Panc1 (cell line): ENCODE measurements at regions of chr11 and their contacts with region 1.

Region 1: DNA sequence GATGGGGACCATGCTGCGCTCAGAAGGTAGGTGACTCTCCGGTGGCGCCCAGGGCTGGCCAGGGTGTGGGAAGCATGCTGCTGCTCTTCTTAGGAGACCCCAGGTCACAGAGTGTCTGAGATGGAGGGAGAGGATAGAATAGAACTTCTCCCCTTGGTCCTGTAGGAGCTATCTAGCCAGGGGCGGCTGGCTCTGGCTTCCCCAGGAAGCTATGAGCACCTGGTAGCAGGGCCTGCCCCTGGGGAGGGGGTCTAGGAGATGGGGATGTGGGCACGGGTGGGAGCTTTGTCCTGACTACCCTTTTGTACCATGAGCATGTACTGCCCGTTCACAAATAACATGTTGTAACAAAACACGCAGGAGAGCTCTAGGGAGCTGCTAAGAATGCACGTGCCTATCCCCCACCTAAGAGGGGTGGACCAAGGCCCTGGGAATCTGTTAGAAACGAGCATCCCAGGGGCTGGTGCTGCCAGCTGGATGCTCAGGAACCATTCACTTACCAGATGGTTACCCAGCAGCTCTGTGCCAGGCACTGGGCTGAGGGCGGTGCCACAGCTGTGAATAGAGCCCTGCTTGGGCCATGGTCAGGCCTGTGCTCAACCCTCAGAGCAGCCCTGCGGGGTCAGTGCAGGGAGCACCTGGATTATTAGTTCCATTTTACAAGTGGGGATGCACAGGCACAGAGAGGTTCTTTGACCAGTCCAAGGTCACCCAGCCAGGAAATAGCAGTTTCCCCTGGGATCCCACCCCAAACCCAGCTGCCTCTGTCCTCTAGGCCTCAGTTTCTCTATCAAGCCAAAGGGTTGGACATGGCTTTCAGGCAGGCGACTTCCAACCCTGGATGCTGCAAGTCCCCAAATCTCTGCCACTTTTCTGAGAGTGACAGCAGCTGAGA is 2.2 kb downstream of the SLC39A13 start:
- DNase-seq: no peak
- ATAC-seq: no peak
- H3K4me3 ChIP-seq: no peak overlapping the region
- H3K27ac ChIP-seq: no peak overlapping the region
- H3K4me1 ChIP-seq: peaks cover 21% of the 10 kb centered on the region
- H3K27me3 ChIP-seq: no peaks in the 10 kb centered on the region
- CTCF ChIP-seq: no peak

Region 2: DNA sequence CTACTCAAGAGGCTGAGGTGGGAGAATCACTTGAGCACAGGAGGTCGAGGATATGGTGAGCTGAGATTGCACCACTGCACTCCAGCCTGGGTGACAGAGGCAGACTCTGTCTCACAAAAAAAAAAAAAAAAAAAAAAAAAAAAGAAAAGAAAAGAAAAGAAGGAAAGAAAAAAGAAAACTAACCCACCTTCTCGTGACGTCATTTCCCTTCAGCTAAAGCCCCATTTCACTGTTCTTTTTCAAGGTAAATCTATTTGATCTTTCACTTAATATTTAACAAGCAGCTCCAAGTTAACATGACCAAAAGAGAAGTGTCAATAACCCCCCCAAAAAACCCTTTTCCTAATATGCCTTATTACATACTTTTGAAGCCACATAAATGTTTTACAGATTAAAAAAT is 33.2 kb after region 1 on chr11:
- CTCF ChIA-PET with region 1: interaction called, 13 read pairs
- POLR2A ChIA-PET with region 1: no interaction called
- in situ Hi-C with region 1: no loop called
- intact Hi-C with region 1: no loop called
- DNase-seq: no peak
- ATAC-seq: no peak
- H3K4me3 ChIP-seq: no peak overlapping the region
- H3K27ac ChIP-seq: no peak overlapping the region
- H3K4me1 ChIP-seq: no peaks in the 10 kb centered on the region
- H3K27me3 ChIP-seq: no peaks in the 10 kb centered on the region
- CTCF ChIP-seq: no peak